Activated CD4-positive, alpha-beta T cell treated with anti-CD3 and anti-CD28 coated beads, Interleukin-2, amount 10 ng/mL, durations not matched to agents 24 days and 14 days (primary cell): ENCODE measurements at regions of chr7 and their contacts with region 1.

Region 1: GRCh38 chr7:50449881-50450589 is at the start of gene FIGNL1:
- DNase-seq: peak; percentile 96
- H3K4me3 Mint-ChIP-seq: peak within 1 kb of the TSS; percentile 95
- H3K27ac Mint-ChIP-seq: peak within 1 kb of the TSS; percentile 80
- H3K4me1 Mint-ChIP-seq: peaks cover 39% of the 10 kb centered on the region
- H3K27me3 Mint-ChIP-seq: peaks cover 7% of the 10 kb centered on the region
- total RNA-seq, gene FIGNL1: 44.7 and 47.4 TPM in 2 replicates

Region 2: GRCh38 chr7:50142425-50143017 is 307.5 kb before region 1 on chr7:
- intact Hi-C with region 1: loop called (anchors 2 kb)
- DNase-seq: peak; percentile 82
- H3K4me3 Mint-ChIP-seq: peak overlapping the region; percentile 57
- H3K27ac Mint-ChIP-seq: peak overlapping the region; percentile 67
- H3K4me1 Mint-ChIP-seq: peaks cover 31% of the 10 kb centered on the region
- H3K27me3 Mint-ChIP-seq: peaks cover 14% of the 10 kb centered on the region

Region 3: DNA sequence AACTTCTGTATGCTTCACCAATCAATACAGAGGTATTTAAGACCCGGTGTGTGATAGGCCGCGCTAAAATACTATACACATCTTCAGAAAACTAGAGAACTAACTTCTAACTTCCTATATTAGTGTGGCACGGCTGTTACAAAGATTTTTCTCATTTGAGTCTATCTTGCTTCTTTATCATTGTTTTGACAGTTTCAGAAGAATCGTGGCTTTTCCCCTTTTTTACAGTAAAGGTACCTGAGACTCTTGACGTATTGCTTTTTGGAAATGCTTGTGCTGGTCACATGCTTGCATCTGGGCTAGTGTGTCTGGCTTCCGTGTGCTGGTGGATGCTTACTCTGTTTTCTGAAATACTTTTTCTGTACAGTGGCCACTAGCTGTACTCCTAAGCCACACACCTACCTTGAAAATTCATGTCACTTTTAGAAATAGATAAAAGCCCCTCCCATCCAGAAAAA is 132.8 kb before region 1 on chr7:
- intact Hi-C with region 1: loop called (anchors 5 kb)
- DNase-seq: peak; percentile 87
- H3K4me3 Mint-ChIP-seq: peak overlapping the region; percentile 79
- H3K27ac Mint-ChIP-seq: peak overlapping the region; percentile 88
- H3K4me1 Mint-ChIP-seq: peaks cover 87% of the 10 kb centered on the region
- H3K27me3 Mint-ChIP-seq: no peaks in the 10 kb centered on the region

Region 4: DNA sequence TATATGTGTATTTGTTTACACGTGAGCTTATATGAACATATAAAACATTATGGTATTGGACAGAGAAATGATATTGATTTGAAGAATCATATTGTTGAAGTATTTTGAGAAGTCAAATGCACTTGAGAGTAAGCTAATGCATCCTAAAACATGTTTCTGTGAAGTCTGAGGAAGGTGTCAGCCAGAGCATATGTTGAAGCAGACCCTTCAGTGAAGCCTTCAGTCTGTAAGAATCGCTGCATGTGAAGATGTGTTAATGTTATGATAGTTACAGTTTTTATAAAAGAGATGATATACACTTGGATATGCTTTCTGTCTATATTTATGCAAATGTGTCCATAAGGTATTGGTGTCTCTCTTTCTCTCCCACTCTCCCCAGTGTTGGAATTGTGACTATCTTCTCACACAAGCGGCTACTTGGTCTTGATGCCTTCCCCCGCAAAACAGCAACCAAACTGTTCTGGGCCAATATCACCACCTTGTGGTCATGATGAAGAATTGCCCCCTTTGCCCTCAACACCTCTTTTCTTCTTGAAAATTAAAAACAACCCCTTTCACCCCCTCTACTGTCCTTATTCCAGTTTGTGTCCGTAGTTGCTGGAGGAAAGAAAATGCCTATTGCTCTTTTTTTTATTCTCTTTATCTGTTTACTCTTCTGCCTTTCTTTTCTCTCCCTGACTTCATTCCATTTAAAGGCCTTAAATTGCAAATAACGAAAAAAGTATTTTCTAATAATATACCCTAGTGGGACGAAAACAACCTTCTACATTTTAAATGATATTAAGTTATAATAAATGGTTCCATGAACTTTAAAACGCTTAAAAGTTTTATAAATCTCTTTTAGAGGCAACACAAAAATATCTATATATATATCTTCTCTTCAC is 80.7 kb before region 1 on chr7:
- intact Hi-C with region 1: loop called (anchors 2 kb)
- DNase-seq: peak; percentile 87
- H3K4me3 Mint-ChIP-seq: peak overlapping the region; percentile 55
- H3K27ac Mint-ChIP-seq: peak overlapping the region; percentile 45
- H3K4me1 Mint-ChIP-seq: peaks cover 85% of the 10 kb centered on the region
- H3K27me3 Mint-ChIP-seq: no peaks in the 10 kb centered on the region

Region 5: DNA sequence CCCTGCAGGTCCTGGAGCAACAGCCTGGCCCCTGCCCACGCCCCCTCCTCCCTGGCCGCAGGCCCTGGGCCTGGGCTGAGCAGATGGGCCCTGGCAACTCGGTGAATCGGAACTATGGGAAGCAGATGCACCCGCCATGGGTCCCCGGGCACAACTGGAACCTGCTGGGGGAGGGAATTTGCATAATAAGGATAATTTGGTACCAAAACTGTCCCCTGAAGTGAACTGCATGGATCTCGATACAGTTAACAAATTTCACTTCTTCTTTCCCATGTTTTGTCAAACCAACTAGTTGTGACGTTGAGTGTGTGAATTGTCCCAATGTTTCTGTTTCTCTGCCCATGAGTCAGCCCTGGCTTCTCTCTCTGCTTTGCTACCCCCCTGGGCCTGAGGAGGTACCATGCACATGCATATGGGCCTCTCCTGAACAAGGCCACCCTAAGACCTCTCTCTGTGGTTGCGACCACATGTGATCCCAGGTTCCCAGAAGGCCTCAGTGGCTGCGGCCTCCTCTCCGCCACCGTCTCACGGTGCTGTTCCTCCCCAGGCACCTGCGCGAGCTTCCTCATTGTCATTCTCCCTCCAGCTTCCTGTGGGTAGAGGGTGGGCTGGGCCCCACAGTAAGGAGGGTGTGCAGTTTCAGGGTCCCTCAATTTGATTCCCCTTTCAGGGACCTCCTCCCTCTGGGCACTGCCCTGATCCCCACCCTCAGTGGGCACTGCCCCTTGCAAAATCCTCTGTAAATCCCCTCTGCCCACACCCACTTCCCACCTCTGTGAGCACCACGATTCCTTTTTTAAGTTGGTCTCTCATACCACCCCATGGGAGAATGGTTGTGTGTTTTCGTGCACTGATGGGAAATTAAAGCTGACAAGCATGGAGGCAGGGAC is 39.9 kb before region 1 on chr7:
- intact Hi-C with region 1: no loop called
- DNase-seq: no peak
- H3K4me3 Mint-ChIP-seq: no peak overlapping the region
- H3K27ac Mint-ChIP-seq: peak overlapping the region; percentile 39
- H3K4me1 Mint-ChIP-seq: peaks cover 52% of the 10 kb centered on the region
- H3K27me3 Mint-ChIP-seq: no peaks in the 10 kb centered on the region

Region 6: GRCh38 chr7:50431316-50431715 is 18.7 kb before region 1 on chr7:
- intact Hi-C with region 1: no loop called
- DNase-seq: no peak
- H3K4me3 Mint-ChIP-seq: no peak overlapping the region
- H3K27ac Mint-ChIP-seq: no peak overlapping the region
- H3K4me1 Mint-ChIP-seq: peaks cover 2% of the 10 kb centered on the region
- H3K27me3 Mint-ChIP-seq: no peaks in the 10 kb centered on the region

Region 7: GRCh38 chr7:50595491-50596102 is 145.6 kb after region 1 on chr7:
- intact Hi-C with region 1: loop called (anchors 5 kb)
- DNase-seq: peak; percentile 64
- H3K4me3 Mint-ChIP-seq: no peak overlapping the region
- H3K27ac Mint-ChIP-seq: no peak overlapping the region
- H3K4me1 Mint-ChIP-seq: peaks cover 18% of the 10 kb centered on the region
- H3K27me3 Mint-ChIP-seq: peaks cover 8% of the 10 kb centered on the region

Region 8: DNA sequence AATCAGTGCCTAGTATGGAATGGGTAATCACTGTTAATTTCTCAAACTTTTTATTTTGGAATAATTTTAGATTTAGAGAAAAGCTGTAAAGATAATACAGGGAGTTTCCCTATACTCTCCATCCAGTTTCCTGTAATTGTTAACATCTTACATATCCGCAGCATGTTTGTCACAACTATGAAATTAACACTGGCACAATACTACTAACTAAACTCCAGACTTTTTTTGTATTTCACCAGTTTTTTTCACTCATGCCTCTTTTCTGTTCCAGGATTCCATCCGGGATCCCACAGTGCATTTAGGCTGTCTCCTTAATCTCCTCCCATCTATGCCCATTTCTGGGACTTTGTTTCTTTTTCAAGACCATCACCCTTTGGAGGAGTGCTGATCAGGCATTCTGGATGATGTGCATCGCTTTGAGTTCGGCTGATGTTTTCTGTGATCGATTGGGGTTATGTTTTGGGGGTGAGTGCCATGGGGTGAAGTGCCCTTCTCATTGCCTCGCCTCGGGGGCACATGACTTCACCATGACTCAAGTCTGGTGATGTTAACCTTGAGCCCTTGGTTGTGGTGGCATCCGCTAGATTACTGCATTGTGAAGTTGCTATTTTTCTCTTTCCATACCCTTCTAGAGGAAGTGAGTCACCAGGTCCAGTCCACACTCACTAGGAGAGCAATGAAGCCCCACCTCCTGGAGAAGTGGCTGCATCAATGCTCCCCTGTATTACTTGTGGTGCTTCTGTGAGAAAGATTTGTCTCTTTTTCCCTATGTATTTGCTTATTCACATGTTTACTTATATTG is 376.5 kb after region 1 on chr7:
- intact Hi-C with region 1: loop called (anchors 5 kb)
- DNase-seq: peak; percentile 81
- H3K4me3 Mint-ChIP-seq: peak overlapping the region; percentile 42
- H3K27ac Mint-ChIP-seq: peak overlapping the region; percentile 81
- H3K4me1 Mint-ChIP-seq: peaks cover 21% of the 10 kb centered on the region
- H3K27me3 Mint-ChIP-seq: peaks cover 25% of the 10 kb centered on the region